HCT116 (cell line): ENCODE measurements at regions of chr17 and their contacts with region 1.

Region 1: GRCh38 chr17:80866147-80866793 is 125.4 kb upstream of the CHMP6 start:
- DNase-seq: peak; percentile 37
- ATAC-seq: peak; percentile 95
- H3K4me3 ChIP-seq: no peak overlapping the region
- H3K27ac ChIP-seq: no peak overlapping the region
- H3K4me1 ChIP-seq: no peaks in the 10 kb centered on the region
- H3K27me3 ChIP-seq: no peaks in the 10 kb centered on the region
- CTCF ChIP-seq: peak; percentile 73 to 86 (median 84); a peak in 5 of 6 replicates
- POLR2A ChIP-seq: no peak
- RAD21 ChIP-seq: peak; percentile 75

Region 2: DNA sequence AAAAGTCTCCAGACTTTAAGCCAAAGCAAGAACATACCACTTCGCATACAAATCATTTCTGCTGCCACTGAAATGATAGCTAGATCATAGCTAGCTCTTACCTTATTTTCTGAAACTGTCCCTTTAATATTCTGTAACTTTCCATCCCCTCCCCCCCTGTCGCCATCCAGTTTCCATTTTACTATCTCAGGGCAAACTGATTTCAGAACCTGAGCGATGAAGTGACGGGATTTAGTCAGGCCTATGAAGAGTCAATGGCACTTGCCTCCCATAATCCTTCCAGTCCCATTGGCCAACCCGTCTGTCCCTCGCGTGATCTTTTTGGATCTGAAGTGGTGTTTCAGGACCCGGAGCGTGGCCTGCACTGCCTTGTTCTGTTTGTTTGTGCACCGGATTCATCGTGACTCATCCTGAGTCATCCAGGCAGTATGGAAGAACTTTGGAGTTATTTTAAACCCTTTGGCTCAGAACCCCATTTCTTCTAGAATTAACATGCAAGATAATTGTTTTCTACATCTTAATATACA is 74.4 kb before region 1 on chr17:
- CTCF ChIA-PET with region 1: no interaction called
- POLR2A ChIA-PET with region 1: no interaction called
- RAD21 ChIA-PET with region 1: no interaction called
- intact Hi-C with region 1: no loop called
- DNase-seq: peak; percentile 99
- ATAC-seq: peak; percentile 94
- H3K4me3 ChIP-seq: peak overlapping the region; percentile 8 to 37; a peak in 3 of 4 replicates
- H3K27ac ChIP-seq: peak overlapping the region; percentile 89
- H3K4me1 ChIP-seq: peaks cover 49 to 63% of the 10 kb centered on the region in 2 experiments
- H3K27me3 ChIP-seq: no peaks in the 10 kb centered on the region
- CTCF ChIP-seq: no peak
- POLR2A ChIP-seq: no peak
- RAD21 ChIP-seq: peak; percentile 55

Region 3: DNA sequence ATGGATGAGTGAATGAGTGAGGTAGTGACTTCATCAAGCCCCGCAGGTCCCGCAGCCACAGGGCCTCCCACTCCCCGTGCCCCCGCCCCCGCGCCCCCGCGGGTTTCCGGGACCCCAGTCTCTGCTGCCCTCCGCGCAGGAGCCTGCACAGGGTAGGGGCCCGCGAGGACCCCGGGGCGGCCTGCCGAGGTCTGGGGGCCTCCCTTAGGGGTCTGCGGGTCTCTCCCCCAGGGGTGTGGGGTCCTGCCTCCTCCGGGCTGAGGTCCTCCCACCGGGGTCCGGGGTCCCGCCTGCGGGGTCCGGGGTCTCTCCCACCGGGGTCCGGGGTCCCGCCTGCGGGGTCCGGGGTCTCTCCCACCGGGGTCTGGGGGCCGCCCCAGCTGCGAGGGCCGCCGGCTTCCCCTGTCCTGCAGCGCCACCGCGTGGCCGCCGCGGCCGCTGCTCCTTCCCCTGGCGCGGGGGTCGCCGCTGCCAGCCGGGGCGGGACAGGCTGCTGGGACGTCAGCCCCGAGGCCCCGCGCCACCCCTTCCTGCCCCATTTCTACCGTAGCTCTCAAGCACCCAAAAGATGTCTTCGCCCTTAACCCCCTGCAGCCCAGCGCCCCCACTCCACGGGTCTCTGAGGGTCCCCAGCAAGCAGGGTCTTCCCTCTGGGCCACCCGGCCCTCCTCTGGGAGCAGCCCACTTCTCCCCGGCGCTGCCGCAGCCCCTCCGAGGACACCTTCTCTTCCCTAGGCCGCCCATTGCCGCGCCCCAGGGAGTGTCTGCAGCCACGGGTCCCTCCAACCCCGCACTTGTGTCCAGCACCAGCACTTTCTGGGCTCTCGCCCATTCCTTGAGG is 115.0 kb after region 1 on chr17:
- CTCF ChIA-PET with region 1: no interaction called
- POLR2A ChIA-PET with region 1: no interaction called
- RAD21 ChIA-PET with region 1: no interaction called
- intact Hi-C with region 1: loop called (anchors 5 kb)
- DNase-seq: no peak
- ATAC-seq: peak; percentile 57
- H3K4me3 ChIP-seq: no peak overlapping the region
- H3K27ac ChIP-seq: no peak overlapping the region; the same call in 1 of the 2 replicates
- H3K4me1 ChIP-seq: peaks cover 21 to 32% of the 10 kb centered on the region in 2 experiments
- H3K27me3 ChIP-seq: no peaks in the 10 kb centered on the region
- CTCF ChIP-seq: peak; percentile 59 to 95 (median 61)
- POLR2A ChIP-seq: no peak
- RAD21 ChIP-seq: peak; percentile 83